HepG2 (cell line): ENCODE measurements at regions of chr22 and their contacts with region 1.

Region 1: DNA sequence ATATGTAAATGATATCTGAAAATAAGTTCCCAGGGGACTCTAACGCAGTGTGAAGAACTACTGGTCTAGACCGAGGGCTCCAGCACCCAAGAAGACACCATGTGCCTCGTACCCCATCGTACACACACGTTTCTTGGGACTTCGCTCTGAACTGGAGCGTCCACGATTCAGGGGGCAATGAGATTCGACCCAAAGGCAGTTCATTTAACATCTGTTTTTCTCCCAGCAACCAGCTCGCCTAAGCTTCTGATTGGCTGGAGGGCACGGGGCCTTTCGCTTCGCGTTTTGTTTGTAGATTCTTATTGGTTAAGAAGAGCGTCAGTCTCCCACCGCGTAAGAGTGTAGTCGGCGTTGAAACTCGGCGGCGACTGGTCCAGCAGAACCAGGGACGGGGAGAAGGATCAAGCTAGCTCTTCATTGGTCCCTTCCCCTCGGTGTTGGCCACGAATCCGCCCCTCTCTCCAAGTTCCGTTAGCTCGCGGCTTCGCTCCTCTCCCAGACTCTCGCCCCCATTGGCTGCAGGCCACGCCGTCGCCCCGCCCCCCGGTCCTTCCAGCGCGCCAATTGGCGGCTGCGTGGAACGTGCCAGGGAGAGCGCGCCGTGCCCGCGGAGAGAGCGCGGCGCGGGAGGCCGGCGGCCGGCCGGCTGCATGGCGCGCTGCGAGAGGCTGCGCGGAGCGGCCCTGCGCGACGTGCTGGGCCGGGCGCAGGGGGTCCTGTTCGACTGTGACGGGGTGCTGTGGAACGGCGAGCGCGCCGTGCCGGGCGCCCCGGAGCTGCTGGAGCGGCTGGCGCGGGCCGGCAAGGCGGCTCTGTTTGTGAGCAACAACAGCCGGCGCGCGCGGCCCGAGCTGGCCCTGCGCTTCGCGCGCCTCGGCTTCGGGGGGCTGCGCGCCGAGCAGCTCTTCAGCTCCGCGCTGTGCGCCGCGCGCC is at the start of gene PDXP:
- DNase-seq: peak; percentile 99
- ATAC-seq: peak; percentile 94
- H3K4me3 ChIP-seq: peak within 1 kb of the TSS; percentile 75 to 97 (median 94)
- H3K27ac ChIP-seq: peak within 1 kb of the TSS; percentile 93
- H3K4me1 ChIP-seq: peaks cover 51% of the 10 kb centered on the region
- H3K27me3 ChIP-seq: no peaks in the 10 kb centered on the region; a peak in 1 of 5 replicates
- CTCF ChIP-seq: no peak
- EP300 ChIP-seq: no peak; a peak in 1 of 4 replicates
- POLR2A ChIP-seq: peak in 1 of 2 experiments; percentile 91
- RAD21 ChIP-seq: peak; percentile 55
- total RNA-seq, gene PDXP: 46.1 and 58.2 TPM in 2 replicates

Region 2: DNA sequence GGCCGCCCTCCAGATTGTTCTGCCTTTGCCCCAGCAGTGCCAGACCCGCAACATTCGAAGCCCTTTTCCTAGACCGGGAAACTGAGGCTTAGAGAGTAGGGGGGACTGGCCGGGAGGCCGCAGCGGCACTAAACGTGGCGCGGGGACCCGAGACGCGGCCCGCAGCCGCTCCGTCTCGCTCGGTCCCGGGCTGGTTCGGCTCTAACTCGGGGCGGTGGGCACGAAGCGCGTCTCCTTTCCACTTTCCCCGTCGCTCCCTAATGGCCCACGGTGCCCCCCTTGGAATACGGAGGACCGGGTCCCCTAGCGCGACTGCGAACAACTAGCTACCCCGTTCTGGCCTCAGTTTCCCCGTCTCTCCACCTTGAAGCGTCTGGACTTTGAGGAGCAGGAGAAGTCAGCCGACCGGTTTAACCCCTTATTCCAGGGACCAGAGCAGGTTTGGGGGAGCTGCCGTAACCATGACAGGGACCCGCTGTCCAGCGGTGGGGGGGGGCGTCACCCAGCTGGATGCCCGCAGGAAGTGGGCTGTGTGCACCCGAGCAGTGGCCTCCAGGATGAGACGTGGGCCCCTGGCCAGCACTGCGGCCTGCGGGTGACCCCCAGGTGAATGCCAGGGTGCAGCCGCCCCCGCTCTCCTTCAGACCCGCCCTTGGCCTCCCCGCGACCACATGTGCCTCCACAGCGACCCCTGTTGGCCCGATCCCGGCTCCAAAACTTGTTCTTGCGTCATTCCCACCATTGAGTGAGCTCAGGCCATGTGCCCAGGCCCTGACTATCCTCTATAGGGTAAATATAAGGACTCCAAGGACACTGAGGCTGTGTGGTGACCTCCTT is 97.0 kb before region 1 on chr22:
- CTCF ChIA-PET with region 1: no interaction called
- POLR2A ChIA-PET with region 1: interaction called, 10 read pairs
- in situ Hi-C with region 1: no loop called
- intact Hi-C with region 1: no loop called
- DNase-seq: peak; percentile 85
- ATAC-seq: peak; percentile 45
- H3K4me3 ChIP-seq: peak overlapping the region; percentile 91 to 98 (median 98)
- H3K27ac ChIP-seq: peak overlapping the region; percentile 91
- H3K4me1 ChIP-seq: peaks cover 81% of the 10 kb centered on the region
- H3K27me3 ChIP-seq: no peaks in the 10 kb centered on the region; a peak in 2 of 5 replicates
- CTCF ChIP-seq: peak; percentile 97
- EP300 ChIP-seq: peak; percentile 69 to 73; a peak in 3 of 4 replicates
- POLR2A ChIP-seq: peak; percentile 73 to 75
- RAD21 ChIP-seq: peak; percentile 85

Region 3: DNA sequence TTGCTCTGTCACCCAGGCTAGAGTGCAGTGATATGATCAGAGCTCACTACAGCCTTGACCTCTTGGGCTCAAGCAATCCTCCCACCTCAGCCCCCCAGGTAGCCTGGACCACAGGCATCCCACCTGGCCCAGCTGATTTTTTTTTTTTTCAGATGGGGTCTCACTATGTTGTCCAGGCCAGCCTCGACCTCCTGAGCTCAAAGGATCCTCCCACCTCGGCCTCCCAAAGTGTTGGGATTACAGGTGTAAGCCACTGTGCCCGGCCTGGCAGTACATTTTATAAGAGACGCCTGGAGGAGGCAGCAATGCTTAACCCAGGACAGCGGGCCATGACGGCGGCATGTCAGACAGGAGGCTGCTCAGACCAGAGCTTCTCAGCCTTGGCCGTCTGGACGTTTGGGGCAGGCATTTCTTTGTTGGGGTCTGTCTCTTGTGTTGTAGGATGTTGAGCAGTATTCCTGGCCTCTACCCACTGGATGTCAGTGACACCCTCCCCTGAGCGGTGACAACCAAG is 82.9 kb before region 1 on chr22:
- CTCF ChIA-PET with region 1: no interaction called
- POLR2A ChIA-PET with region 1: no interaction called
- in situ Hi-C with region 1: no loop called
- intact Hi-C with region 1: no loop called
- DNase-seq: no peak
- ATAC-seq: no peak
- H3K4me3 ChIP-seq: no peak overlapping the region
- H3K27ac ChIP-seq: no peak overlapping the region
- H3K4me1 ChIP-seq: peaks cover 67% of the 10 kb centered on the region
- H3K27me3 ChIP-seq: 0 out of 5 replicates have a peak, but pooled peaks cover 0 to 1% of the 10 kb centered on the region in 2 experiments
- CTCF ChIP-seq: no peak
- EP300 ChIP-seq: no peak
- POLR2A ChIP-seq: no peak
- RAD21 ChIP-seq: no peak

Region 4: GRCh38 chr22:37633625-37634416 is 24.6 kb before region 1 on chr22:
- CTCF ChIA-PET with region 1: no interaction called
- POLR2A ChIA-PET with region 1: interaction called, 242 read pairs
- in situ Hi-C with region 1: no loop called
- intact Hi-C with region 1: no loop called
- DNase-seq: peak; percentile 85
- ATAC-seq: peak; percentile 67
- H3K4me3 ChIP-seq: peak overlapping the region; percentile 31 to 69 (median 51); a peak in 5 of 6 replicates
- H3K27ac ChIP-seq: peak overlapping the region; percentile 84
- H3K4me1 ChIP-seq: peaks cover 84% of the 10 kb centered on the region
- H3K27me3 ChIP-seq: no peaks in the 10 kb centered on the region
- CTCF ChIP-seq: peak; percentile 70
- EP300 ChIP-seq: peak in 1 of 2 experiments; percentile 4; a peak in 1 of 4 replicates
- POLR2A ChIP-seq: peak; percentile 51 to 76
- RAD21 ChIP-seq: 0 out of 2 replicates have a peak, but pooled peaks have one; percentile 15

Region 5: GRCh38 chr22:37676736-37677492 is 18.5 kb after region 1 on chr22:
- CTCF ChIA-PET with region 1: interaction called, 7 read pairs
- POLR2A ChIA-PET with region 1: interaction called, 120 read pairs
- in situ Hi-C with region 1: no loop called
- intact Hi-C with region 1: loop called (anchors 1 kb)
- DNase-seq: peak; percentile 75
- ATAC-seq: peak; percentile 20
- H3K4me3 ChIP-seq: peak overlapping the region; percentile 57 to 71 (median 59)
- H3K27ac ChIP-seq: peak overlapping the region; percentile 33
- H3K4me1 ChIP-seq: peaks cover 54% of the 10 kb centered on the region
- H3K27me3 ChIP-seq: no peaks in the 10 kb centered on the region
- CTCF ChIP-seq: no peak
- EP300 ChIP-seq: no peak
- POLR2A ChIP-seq: no peak
- RAD21 ChIP-seq: no peak

Region 6: GRCh38 chr22:37686002-37686982 is 27.9 kb after region 1 on chr22 and contains the start of gene NOL12:
- CTCF ChIA-PET with region 1: interaction called, 7 read pairs
- POLR2A ChIA-PET with region 1: interaction called, 58 read pairs
- in situ Hi-C with region 1: no loop called
- intact Hi-C with region 1: loop called (anchors 1 kb)
- DNase-seq: peak; percentile 78
- ATAC-seq: peak; percentile 79
- H3K4me3 ChIP-seq: peak within 1 kb of the TSS; percentile 85 to 96 (median 93)
- H3K27ac ChIP-seq: peak within 1 kb of the TSS; percentile 82
- H3K4me1 ChIP-seq: peaks cover 41% of the 10 kb centered on the region
- H3K27me3 ChIP-seq: no peaks in the 10 kb centered on the region
- CTCF ChIP-seq: no peak
- EP300 ChIP-seq: 0 out of 4 replicates have a peak, but pooled peaks of 1 of the 2 experiments have one; percentile 24
- POLR2A ChIP-seq: peak; percentile 52 to 76; a peak in 3 of 4 replicates
- RAD21 ChIP-seq: peak; percentile 34
- total RNA-seq, gene NOL12: 27.5 and 31.4 TPM in 2 replicates

Region 7: DNA sequence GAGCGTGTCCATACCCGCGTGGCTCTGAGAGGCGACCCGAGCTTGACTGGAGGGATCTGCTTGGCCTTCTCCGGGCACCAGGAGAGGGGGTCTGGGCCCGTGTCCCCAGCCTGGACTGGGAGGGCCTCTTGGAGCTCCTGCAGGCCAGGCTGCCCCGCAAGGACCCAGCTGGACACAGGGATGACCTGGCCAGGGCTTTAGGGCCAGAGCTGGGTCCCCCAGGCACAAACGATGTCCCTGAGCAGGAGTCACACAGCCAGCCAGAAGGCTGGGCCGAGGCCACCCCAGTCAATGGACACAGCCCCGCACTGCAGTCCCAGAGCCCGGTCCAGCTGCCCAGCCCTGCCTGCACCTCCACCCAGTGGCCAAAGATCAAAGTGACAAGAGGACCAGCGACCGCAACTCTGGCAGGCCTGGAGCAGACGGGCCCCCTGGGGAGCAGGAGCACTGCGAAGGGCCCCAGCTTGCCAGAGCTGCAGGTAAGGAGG is 76.6 kb after region 1 on chr22:
- CTCF ChIA-PET with region 1: no interaction called
- POLR2A ChIA-PET with region 1: interaction called, 14 read pairs
- in situ Hi-C with region 1: no loop called
- intact Hi-C with region 1: no loop called
- DNase-seq: peak; percentile 72
- ATAC-seq: peak; percentile 86
- H3K4me3 ChIP-seq: peak overlapping the region; percentile 43 to 61 (median 49); a peak in 4 of 6 replicates
- H3K27ac ChIP-seq: peak overlapping the region; percentile 31
- H3K4me1 ChIP-seq: peaks cover 79% of the 10 kb centered on the region
- H3K27me3 ChIP-seq: no peaks in the 10 kb centered on the region
- CTCF ChIP-seq: peak; percentile 96
- EP300 ChIP-seq: no peak
- POLR2A ChIP-seq: no peak
- RAD21 ChIP-seq: peak; percentile 90

Region 8: DNA sequence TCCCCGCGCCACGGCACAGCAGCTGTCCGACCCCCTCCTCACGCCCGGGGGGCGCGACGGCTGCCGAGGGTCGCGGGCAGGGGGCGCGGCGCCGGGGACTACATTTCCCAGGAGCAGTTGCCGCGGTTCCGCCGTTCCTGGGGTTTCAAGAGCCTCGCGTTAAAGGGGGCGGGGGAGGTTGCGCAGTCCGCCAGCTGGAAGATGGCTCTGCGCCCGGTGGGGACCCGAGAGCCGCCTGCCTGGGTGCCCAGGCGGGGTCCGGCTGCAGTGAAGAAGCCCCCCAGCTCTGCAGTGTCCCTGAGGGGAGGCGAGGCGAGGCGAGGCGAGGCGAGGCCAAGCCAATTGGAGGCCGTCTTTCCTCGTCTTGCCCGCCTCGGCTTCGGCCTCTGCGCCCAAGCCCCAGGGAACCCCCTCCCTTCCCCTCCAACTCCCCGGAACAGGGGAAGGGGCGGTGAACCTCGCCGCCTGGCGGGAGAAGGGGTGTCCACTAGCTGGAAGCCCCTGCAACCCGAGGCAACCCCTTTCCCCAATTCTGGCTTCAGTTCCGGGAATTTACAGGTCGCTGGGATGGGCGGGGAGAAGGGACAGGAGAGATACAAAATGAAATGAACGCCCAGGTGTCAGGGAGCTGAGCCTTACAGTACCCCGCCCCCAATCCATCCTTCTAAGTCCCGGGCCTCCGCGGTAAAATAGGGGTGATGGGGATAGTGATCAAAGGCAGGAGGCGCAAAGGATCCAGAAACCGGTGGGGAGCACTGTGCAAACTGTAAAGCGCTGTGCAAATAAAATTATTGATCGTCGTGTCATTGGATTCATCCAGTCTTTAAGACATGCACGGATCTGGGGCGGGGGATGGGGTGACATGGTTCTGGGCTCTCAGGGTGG is 144.2 kb after region 1 on chr22:
- CTCF ChIA-PET with region 1: no interaction called
- POLR2A ChIA-PET with region 1: interaction called, 15 read pairs
- in situ Hi-C with region 1: no loop called
- intact Hi-C with region 1: loop called (anchors 10 kb)
- DNase-seq: peak; percentile 54
- ATAC-seq: peak; percentile 58
- H3K4me3 ChIP-seq: peak overlapping the region; percentile 78 to 95 (median 93)
- H3K27ac ChIP-seq: peak overlapping the region; percentile 77
- H3K4me1 ChIP-seq: peaks cover 25% of the 10 kb centered on the region
- H3K27me3 ChIP-seq: no peaks in the 10 kb centered on the region; a peak in 1 of 5 replicates
- CTCF ChIP-seq: peak; percentile 40
- EP300 ChIP-seq: peak in 1 of 2 experiments; percentile 27; a peak in 1 of 4 replicates
- POLR2A ChIP-seq: peak; percentile 40 to 53; a peak in 3 of 4 replicates
- RAD21 ChIP-seq: peak; percentile 6; the same call in 1 of the 2 replicates

Region 9: GRCh38 chr22:37817705-37818408 is 159.5 kb after region 1 on chr22:
- CTCF ChIA-PET with region 1: no interaction called
- POLR2A ChIA-PET with region 1: no interaction called
- in situ Hi-C with region 1: no loop called
- intact Hi-C with region 1: no loop called
- DNase-seq: peak; percentile 86
- ATAC-seq: peak; percentile 70
- H3K4me3 ChIP-seq: peak overlapping the region; percentile 29 to 63 (median 35); a peak in 4 of 6 replicates
- H3K27ac ChIP-seq: peak overlapping the region; percentile 72
- H3K4me1 ChIP-seq: peaks cover 50% of the 10 kb centered on the region
- H3K27me3 ChIP-seq: no peaks in the 10 kb centered on the region
- CTCF ChIP-seq: peak; percentile 100
- EP300 ChIP-seq: peak in 1 of 2 experiments; percentile 23; a peak in 1 of 4 replicates
- POLR2A ChIP-seq: peak in 1 of 2 experiments; percentile 63; a peak in 1 of 4 replicates
- RAD21 ChIP-seq: peak; percentile 98